ENCODE measurements at regions of chr22 and their contacts with region 1.

Region 1: DNA sequence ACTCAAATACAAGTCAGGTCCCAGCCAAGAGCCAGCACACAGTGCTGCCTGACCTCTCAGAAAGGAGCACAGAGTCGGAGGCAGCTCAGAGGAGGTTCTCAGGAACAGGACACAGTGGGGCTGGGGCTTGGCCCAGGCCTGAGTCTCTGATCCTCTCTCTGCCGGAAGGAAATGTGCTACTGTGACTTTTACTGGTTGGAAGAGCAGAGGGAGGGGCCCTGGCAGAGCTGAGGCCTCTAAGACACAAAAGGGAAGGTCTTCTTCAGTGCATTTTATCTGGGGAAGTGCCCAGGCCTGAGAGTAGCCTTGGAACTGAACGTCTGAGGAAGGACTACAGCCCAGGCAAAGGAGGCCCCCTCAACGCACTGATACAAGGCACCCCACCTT is 16.2 kb upstream of the CASTOR1 start:
- DNase-seq: peak; percentile 79
- H3K4me3 Mint-ChIP-seq: peak overlapping the region; percentile 78
- H3K27ac Mint-ChIP-seq: peak overlapping the region; percentile 96
- H3K4me1 Mint-ChIP-seq: peaks cover 94% of the 10 kb centered on the region
- H3K27me3 Mint-ChIP-seq: no peaks in the 10 kb centered on the region

Region 2: DNA sequence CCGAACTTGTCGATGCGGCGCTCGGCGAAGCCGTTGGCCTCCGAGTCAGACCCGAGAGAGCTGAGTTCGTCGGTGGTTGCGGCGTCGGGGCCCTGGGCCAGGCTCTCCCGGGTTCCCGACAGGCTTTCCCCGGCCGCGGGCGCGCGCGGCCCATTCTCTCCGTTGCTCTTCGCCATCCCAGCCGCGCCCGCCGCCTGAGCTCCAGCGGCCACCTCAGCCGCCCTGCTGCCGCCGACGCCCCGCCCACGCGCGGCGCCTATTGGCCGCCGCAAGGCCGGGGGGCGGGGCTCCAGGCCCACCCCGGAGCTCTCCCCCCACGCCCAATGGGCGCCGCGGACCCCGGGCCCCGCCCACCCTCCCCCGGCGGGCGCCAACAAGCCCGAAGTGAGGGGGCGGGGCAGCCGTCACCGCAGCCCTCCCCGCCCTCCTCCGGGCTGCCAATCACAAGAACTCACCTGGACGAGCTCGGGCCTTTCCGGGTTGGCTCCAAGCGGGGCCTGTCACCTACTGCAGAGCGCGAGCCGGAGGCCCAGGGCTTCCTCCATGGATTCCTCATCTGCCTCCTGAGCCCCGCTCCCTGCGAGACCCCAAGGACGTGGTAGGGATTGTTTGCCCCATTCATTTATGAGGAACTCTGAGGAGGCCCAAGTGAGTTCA is 21.3 kb after region 1 on chr22 and contains the start of gene TBC1D10A:
- CTCF ChIA-PET with region 1: interaction called, 9 read pairs
- POLR2A ChIA-PET with region 1: interaction called, 229 read pairs
- DNase-seq: peak; percentile 96
- H3K4me3 Mint-ChIP-seq: peak within 1 kb of the TSS; percentile 88
- H3K27ac Mint-ChIP-seq: peak within 1 kb of the TSS; percentile 74
- H3K4me1 Mint-ChIP-seq: peaks cover 49% of the 10 kb centered on the region
- H3K27me3 Mint-ChIP-seq: no peaks in the 10 kb centered on the region
- total RNA-seq, gene TBC1D10A: 37.9 to 41.6 TPM